ENCODE measurements at regions of chr13 and their contacts with region 1.

Region 1: DNA sequence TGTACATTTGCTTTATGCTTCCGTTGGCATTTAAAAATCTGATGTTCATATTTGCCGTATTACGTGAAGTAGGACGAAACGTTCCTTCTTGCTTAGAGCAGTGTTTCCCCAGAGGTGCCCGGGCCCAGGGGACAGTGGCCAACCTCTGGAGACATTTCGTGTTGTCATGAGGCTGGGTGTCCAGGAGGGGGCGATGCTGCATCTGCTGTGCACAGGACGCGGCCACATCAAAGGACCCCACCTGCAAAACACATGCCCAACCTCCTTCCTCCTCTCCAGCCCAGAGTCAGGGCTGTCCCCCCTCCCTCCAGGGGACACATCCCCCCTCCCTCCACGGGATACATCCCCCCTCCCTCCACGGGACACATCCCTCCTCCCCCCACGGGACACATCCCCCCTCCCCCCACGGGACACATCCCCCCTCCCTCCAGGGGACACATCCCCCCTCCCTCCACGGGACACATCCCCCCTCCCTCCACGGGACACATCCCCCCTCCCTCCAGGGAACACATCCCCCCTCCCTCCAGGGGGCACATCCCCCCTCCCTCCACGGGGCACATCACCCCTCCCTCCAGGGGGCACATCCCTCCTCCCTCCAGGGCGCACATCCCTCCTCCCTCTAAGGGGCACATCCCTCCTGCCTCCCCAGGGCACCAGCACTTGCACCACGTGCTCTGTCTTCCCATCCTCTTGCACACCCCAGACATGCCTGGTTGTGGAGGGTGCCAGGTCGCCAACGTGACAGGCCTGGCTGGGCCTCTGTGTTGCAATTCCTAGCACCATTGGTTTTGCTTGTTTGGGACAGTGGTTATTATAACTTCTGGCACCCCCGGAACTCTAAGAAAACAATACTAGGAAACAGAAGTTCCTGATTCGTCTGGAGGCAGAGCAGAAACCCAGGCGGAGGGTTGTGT is 46.7 kb downstream of the GAS6 start:
- DNase-seq: peak; percentile 90
- ATAC-seq: peak; percentile 43

Region 2: DNA sequence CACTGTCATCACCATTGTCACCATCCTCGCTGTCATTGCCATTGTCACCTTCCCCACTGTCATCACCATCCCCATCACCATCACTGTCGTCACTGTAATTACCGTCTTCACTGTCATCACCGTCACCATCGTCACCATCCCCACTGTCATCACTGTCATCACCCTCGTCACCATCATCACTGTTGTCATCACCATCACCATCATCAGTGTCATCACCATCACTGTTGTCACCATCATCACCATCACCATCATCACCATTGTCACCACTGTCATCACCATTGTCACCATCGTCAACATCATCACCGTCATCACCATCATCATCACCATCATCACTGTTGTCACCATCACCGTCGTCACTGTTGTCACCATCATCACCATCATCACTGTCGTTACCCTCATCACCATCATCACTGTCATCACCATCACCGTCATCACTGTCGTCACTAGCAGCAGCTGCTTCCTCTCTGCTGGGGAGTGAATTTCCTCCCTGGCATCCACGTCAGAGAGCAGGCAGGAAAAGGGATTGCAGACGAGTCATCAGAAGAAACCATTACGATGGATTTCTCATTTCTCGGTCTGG is 30.9 kb before region 1 on chr13:
- intact Hi-C with region 1: no loop called
- DNase-seq: no peak
- ATAC-seq: no peak

Region 3: DNA sequence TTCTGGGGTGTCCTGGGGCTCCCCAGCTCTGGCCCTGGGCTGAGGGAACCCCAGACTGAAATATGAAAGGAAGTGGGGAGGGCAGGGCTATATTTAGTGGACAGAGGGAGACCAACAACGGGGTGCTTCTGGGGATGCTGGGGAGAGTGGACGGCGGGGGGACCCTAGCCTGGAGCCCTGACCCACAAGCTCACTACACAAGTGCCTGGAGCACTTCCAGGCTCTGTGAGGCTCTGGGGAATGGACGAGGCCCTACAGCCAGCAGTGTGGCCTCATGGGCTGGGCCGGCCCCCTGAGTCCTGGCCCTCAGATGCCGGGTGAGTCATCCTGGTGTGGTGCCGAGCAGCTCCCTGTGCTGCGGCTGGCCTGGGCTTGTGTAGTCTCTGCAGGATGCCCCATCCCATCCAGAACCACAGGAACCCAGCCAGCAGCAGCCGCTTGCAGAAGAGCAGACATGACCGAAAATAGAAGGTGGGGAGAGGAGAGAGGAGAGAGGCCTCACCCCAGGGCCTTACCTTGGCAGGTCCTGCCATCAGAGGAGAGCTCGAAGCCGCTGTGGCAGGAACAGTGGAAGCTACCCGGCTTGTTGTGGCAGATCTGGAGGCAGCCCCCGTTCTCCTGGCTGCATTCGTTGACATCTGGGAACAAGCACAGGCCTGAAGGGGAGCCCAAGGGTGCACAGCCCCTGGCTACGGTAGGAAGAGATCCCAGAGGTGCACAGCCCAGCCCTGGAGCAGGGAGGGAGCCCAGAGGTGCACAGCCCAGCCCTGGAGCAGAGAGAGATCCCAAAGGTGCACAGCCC is 20.6 kb after region 1 on chr13:
- intact Hi-C with region 1: loop called (anchors 1 kb)
- DNase-seq: peak; percentile 96
- ATAC-seq: peak; percentile 96

Region 4: DNA sequence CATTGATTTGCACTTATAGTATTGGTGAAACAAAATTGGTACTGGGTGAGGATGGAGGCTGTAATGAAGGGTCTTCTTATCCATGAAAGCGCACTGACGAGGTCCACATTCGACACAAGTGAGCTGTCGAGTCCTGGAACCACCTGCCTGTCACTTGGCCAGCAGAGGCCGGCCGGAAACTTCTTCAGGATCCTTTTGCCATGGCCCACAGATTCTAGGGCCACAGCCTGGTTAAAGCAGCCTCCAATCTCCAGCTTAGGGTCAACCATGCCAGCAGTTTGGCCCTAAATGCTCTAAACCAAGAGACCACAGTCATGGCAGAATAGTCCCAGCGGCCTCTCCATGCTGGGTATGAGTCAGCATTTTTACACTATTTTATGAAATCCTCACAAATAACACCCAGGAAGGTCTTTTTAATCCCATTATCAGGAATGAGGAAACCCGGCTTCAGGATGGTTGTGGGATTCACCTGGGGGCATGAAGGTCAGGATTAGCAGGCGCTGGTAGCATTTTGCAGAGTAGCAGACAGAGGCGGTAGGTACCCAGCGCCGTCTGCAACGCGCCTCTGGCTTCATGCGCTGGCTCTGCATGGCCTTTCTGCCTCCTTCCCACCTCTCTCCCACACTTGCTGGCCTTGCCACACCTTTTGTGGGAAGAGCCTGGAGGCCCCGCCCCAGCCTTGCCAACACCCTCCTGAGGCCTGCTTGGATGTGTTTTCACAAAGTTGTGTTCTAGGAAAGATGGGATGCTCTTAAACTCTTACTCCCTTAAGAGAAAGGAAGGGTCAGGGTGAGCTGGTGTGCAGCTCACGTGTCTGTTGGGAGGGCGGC is 31.4 kb after region 1 on chr13:
- intact Hi-C with region 1: no loop called
- DNase-seq: no peak
- ATAC-seq: no peak

Region 5: DNA sequence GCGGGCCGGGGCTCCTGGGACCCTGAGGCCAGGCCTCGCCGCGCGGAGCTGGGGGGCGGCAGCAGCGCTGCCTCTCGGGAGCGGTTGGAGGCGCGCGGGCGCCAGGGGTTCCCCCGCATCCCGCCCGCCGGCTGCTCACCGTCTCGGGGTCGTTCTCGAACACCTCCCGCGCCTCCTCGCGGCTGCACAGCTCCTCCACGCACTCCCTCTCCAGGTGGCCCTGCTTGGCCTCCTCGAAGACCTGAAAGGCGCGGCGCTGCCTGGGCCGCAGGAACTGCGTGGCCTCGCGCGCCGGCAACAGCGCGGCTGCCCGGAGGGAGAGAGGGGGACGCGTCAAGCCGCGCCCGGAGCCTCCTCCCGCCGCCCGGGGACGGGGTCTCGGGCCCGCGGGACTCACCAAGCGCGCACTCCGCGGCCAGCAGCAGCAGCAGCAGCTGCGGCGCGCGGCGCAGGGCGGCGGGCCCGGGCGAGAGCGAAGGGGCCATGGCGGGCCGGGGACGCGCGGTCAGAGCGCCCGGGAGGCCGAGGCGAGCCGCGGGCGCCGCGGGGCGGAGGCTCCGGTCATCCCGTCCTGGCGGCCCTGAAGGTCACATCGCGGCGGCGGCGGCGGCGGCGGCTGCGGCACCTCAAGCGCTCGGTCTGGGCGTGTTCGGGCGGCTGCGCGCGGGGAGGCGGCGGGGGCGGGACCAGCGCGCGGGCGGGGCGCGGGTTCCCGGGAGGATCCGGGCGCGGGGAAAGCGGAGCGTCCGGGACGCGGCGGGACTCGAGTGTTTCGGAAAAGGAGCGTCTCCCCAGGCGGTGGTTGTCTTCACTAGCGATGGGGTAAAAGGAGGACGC is 46.5 kb after region 1 on chr13 and contains the start of gene GAS6:
- intact Hi-C with region 1: loop called (anchors 2 kb)
- DNase-seq: no peak
- ATAC-seq: peak; percentile 76
- total RNA-seq, gene GAS6: 189 TPM

Region 6: DNA sequence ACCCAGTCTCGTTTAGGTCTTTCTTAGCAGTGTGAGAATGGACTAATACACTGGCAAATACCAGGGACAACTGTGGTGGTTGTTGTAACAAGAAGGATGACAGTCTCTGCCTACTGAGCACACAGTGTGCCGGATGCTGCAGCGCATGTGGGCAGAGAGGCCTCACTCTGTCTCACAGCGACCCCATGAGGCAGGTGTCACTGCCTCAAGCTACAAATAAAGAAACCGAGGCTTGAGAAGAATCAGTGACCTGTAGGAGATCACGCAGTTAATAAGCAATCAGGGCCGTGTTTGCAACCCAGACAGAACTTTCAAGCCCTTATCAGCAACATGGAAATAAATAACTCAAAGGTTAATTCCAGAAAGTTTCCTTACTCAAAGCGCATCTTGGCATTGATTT is 87.2 kb after region 1 on chr13:
- intact Hi-C with region 1: loop called (anchors 2 kb)
- DNase-seq: no peak
- ATAC-seq: peak; percentile 90

Region 7: GRCh38 chr13:113951246-113951999 is 134.2 kb after region 1 on chr13:
- intact Hi-C with region 1: loop called (anchors 1 kb)
- DNase-seq: peak; percentile 93
- ATAC-seq: peak; percentile 95

Region 8: DNA sequence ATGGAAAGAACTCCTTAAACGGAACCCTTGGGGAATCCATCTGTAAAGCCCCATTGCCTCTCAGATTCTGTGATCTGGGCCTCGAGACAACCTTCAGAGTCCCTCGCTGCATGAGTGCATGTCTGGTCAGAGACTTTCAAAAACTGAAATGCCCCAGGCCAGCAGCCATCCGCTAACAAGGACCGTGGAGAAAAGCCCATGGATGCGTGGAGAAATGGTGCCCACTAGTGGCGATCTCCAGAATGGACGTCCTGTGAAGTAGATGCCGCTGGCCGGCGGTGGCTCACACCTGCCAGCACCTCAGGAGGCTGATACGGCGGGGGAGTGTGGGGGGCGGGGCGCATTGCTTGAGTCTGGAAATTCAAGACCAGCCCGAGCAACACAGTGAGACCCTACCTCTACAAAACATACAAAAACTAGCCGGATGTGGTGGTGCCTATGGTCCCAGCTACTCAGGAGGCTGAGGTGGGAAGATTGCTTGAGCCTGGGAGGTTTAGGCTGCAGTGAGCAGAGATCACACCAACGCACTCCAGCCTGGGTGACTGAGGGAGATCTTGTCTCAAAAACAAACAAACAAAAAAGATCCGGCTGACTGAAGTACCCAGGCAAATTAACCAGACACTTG is 409.6 kb after region 1 on chr13:
- intact Hi-C with region 1: loop called (anchors 2 kb)
- DNase-seq: peak; percentile 87
- ATAC-seq: peak; percentile 84

Measured in Right ventricle myocardium inferior (tissue), 1 donor.